ENCODE measurements at regions of chr1 and their contacts with region 1.

Region 1: DNA sequence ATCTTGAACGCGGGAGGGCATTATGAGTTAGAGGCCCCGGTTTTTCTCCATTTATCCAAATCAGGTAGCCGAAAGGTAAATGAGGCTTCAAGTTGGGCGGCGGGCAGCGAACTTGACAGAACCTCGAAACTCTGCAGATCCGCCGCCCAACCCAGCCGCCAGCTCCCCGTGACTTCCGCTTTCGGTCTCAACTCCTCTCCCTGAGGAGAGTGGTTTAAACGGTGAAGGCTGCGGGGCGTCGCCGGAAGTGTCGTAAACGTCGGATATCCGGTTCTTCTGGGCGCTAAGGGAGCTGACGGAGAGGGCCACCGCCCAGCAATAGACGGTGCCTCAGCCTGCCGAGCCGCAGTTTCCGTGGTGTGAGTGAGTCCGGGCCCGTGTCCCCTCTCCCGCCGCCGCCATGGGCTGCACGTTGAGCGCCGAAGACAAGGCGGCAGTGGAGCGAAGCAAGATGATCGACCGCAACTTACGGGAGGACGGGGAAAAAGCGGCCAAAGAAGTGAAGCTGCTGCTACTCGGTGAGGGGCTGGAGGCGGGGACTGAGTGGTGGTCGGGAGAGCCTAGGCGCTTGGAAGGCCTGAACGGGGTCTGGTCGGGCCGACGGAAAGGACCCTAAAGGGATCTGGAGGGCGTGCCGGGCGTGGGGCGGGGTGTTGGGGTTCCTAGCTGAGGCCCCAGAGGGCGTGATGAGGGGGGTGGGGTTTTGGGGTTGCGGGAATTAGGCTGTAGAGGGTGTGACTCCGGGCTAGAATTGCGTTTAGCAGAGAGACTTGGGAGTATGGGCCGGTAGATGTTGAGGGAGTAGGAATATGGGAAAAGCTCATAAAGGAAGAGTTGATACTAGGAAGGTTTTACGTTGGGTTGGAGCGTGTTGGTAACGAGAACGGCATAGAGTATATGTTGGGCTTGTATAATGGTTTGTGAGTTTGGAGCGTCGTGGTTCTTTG is at the start of gene GNAI3:
- DNase-seq: peak; percentile 98
- ATAC-seq: peak; percentile 95
- H3K4me3 Mint-ChIP-seq: peak within 1 kb of the TSS; percentile 98
- H3K27ac Mint-ChIP-seq: peak within 1 kb of the TSS; percentile 96
- H3K4me1 Mint-ChIP-seq: peaks cover 40% of the 10 kb centered on the region
- H3K27me3 Mint-ChIP-seq: no peaks in the 10 kb centered on the region
- CTCF ChIP-seq: no peak
- total RNA-seq, gene GNAI3: 7.5 to 7.7 TPM

Region 2: GRCh38 chr1:109327285-109327684 is 221.3 kb before region 1 on chr1:
- CTCF ChIA-PET with region 1: no interaction called
- POLR2A ChIA-PET with region 1: no interaction called
- intact Hi-C with region 1: no loop called
- DNase-seq: no peak
- ATAC-seq: no peak
- H3K4me3 Mint-ChIP-seq: no peak overlapping the region
- H3K27ac Mint-ChIP-seq: no peak overlapping the region
- H3K4me1 Mint-ChIP-seq: no peaks in the 10 kb centered on the region
- H3K27me3 Mint-ChIP-seq: no peaks in the 10 kb centered on the region
- CTCF ChIP-seq: no peak

Region 3: GRCh38 chr1:109361649-109362048 is 186.9 kb before region 1 on chr1:
- CTCF ChIA-PET with region 1: no interaction called
- POLR2A ChIA-PET with region 1: no interaction called
- intact Hi-C with region 1: no loop called
- DNase-seq: no peak
- ATAC-seq: no peak
- H3K4me3 Mint-ChIP-seq: no peak overlapping the region
- H3K27ac Mint-ChIP-seq: no peak overlapping the region
- H3K4me1 Mint-ChIP-seq: no peaks in the 10 kb centered on the region
- H3K27me3 Mint-ChIP-seq: peaks cover 2% of the 10 kb centered on the region
- CTCF ChIP-seq: no peak

Region 4: DNA sequence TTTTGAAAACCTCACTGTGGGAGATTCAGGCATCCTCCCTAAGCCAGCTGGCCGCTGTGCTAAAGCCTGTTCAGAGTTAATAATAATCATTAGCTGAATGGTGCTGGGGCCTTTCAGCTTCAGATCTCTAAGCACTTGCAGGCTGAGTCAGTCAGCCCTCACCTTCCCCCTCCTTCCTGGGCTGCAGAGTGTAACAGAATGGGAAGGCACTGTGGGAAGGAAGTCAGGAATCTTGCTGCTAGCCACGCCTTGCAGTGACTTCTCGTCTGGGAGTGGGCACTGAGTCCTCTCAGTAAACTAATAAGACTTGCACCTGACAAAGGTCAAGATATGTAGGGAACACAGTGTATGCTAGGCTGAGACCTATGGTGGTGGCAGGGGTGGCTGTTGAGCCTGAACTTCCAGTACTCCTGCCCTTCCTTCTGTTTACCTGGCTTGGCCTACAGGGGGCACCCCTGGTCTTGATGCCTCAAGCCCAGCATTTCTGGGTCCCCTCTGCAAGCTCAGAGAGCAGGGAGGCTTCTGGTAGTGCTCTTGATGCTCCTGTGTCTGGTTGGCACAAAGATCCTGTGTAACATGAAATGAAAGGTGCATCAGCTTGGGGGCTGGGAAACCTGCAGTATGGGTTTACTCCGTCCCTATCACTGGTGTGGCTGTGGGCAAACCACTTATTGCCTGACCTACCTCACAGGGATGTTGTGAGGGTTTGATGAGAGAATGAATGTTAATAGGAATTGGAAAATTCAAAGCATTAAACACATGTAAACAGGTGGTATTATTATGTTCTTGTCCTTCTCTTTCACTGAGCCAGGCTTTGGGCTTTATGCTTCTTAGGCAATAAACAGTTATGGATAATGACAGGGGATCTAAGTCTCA is 48.7 kb before region 1 on chr1:
- CTCF ChIA-PET with region 1: interaction called, 13 read pairs
- POLR2A ChIA-PET with region 1: interaction called, 7 read pairs
- intact Hi-C with region 1: no loop called
- DNase-seq: peak; percentile 77
- ATAC-seq: peak; percentile 37
- H3K4me3 Mint-ChIP-seq: no peak overlapping the region
- H3K27ac Mint-ChIP-seq: peak overlapping the region; percentile 79
- H3K4me1 Mint-ChIP-seq: peaks cover 86% of the 10 kb centered on the region
- H3K27me3 Mint-ChIP-seq: no peaks in the 10 kb centered on the region
- CTCF ChIP-seq: peak; percentile 64

Region 5: DNA sequence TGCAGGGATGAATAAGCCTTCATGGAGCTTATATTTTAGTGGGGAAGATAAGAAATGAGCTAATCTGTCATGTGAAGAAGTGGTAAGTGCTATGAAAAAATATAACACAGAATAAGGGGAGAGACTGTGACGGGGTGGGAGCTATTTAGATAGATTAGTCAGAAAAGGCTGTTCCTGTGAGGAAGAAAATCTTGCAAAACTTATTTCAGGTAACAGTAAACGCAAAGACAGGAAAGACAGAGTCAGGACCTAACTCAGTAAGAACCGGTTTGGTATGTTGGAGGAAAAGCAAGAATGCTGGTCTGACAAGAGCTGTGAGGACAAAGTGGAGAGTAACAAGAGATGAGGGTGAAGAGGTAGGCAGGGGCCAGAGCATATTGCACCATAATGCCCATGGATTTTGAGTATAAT is 21.8 kb after region 1 on chr1:
- CTCF ChIA-PET with region 1: interaction called, 10 read pairs
- POLR2A ChIA-PET with region 1: interaction called, 7 read pairs
- intact Hi-C with region 1: no loop called
- DNase-seq: no peak
- ATAC-seq: no peak
- H3K4me3 Mint-ChIP-seq: no peak overlapping the region
- H3K27ac Mint-ChIP-seq: no peak overlapping the region
- H3K4me1 Mint-ChIP-seq: peaks cover 31% of the 10 kb centered on the region
- H3K27me3 Mint-ChIP-seq: no peaks in the 10 kb centered on the region
- CTCF ChIP-seq: no peak

Region 6: GRCh38 chr1:109620841-109621286 is 72.3 kb after region 1 on chr1:
- CTCF ChIA-PET with region 1: interaction called, 33 read pairs
- POLR2A ChIA-PET with region 1: interaction called, 26 read pairs
- intact Hi-C with region 1: loop called (anchors 5 kb)
- DNase-seq: peak; percentile 99
- ATAC-seq: peak; percentile 87
- H3K4me3 Mint-ChIP-seq: peak overlapping the region; percentile 88
- H3K27ac Mint-ChIP-seq: peak overlapping the region; percentile 93
- H3K4me1 Mint-ChIP-seq: peaks cover 58% of the 10 kb centered on the region
- H3K27me3 Mint-ChIP-seq: no peaks in the 10 kb centered on the region
- CTCF ChIP-seq: no peak

Region 7: DNA sequence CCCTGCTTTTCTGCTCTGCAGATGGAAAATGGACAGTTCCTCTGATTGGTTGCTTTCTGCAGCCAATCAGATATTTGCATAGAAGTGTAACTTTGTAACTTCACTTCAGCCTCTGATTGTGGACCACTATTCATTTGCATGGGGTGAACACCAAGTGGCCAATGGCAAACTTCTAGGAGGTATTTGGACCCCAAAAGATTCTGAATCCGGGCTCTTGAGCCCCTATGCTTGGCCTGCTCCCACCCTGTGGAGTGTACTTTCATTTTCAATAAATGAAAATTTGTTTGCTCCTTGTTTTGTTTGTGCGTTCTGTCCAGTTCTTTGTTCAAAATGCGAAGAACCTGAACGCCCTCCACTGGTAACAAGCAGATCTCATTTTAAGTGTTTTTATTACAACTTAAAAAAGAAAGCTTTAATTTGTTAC is 100.9 kb after region 1 on chr1:
- CTCF ChIA-PET with region 1: interaction called, 294 read pairs
- POLR2A ChIA-PET with region 1: no interaction called
- intact Hi-C with region 1: loop called (anchors 5 kb)
- DNase-seq: no peak
- ATAC-seq: no peak
- H3K4me3 Mint-ChIP-seq: no peak overlapping the region
- H3K27ac Mint-ChIP-seq: no peak overlapping the region
- H3K4me1 Mint-ChIP-seq: no peaks in the 10 kb centered on the region
- H3K27me3 Mint-ChIP-seq: peaks cover 3% of the 10 kb centered on the region
- CTCF ChIP-seq: peak; percentile 32

Region 8: DNA sequence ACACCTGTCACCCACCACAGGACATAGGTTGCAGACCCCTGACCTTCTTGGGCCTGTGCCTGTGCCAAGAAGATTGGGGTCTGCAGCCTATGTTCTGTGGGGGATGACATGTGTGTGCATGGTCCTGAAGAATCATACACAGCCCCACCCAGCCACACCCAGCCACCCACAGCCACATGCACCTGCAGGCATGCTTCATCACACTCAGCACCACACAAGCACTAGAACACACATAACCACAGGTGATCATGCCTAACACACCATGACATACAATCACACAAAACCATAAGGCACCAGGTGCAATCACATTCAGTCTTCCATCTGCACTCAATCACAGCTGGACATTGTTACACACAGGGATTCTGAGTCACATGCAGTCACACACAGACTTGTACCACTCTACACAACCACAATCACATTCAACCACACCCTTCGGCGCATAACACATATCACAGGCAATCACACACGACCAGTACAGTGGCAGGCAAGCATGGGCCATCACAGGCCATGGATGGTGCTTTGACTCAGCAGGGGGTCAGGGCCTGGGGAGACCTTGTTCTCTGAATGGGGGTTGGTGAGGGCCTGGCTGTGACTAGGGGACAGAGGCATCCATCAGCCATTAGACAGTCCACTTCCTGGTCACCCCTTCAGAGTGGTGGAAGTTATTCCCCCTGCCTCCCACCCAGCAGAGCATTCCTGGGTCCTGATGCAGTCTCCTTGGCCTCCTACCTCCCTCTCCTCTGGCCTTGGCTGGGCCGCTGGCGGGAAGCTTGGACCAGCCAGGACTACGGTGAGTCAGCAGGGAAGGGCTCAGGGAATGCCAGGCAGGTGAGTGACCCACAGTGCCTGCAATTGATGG is 259.5 kb after region 1 on chr1:
- CTCF ChIA-PET with region 1: no interaction called
- POLR2A ChIA-PET with region 1: no interaction called
- intact Hi-C with region 1: no loop called
- DNase-seq: no peak
- ATAC-seq: peak; percentile 59
- H3K4me3 Mint-ChIP-seq: no peak overlapping the region
- H3K27ac Mint-ChIP-seq: peak overlapping the region; percentile 75
- H3K4me1 Mint-ChIP-seq: peaks cover 22% of the 10 kb centered on the region
- H3K27me3 Mint-ChIP-seq: no peaks in the 10 kb centered on the region
- CTCF ChIP-seq: no peak

Measured in activated CD8-positive, alpha-beta T cell treated with anti-CD3 and anti-CD28 coated beads for 36 hours (primary cell).